Left ventricle myocardium superior (tissue), 1 donor: ENCODE measurements at regions of chr12 and their contacts with region 1.

Region 1: DNA sequence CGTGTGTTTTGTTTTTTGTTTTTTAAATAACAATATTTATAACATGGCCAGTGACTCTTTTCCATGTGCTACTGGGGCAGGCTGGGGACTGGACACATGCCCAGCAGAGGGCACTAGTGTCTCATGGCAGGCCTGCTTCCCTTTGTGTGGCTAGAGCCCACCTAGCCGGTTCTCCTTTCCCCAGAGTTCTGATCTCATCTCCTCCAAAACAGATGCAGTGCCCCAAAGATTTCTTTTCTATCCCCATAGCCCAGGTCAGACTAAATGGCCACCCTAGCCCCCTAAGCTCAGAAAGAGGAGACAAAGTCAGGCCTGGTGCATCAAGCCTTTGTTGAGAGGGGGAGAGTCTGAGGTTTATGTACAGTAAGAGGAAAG is 21.2 kb downstream of the PRPF40B start:
- DNase-seq: peak; percentile 85
- ATAC-seq: peak; percentile 81

Region 2: DNA sequence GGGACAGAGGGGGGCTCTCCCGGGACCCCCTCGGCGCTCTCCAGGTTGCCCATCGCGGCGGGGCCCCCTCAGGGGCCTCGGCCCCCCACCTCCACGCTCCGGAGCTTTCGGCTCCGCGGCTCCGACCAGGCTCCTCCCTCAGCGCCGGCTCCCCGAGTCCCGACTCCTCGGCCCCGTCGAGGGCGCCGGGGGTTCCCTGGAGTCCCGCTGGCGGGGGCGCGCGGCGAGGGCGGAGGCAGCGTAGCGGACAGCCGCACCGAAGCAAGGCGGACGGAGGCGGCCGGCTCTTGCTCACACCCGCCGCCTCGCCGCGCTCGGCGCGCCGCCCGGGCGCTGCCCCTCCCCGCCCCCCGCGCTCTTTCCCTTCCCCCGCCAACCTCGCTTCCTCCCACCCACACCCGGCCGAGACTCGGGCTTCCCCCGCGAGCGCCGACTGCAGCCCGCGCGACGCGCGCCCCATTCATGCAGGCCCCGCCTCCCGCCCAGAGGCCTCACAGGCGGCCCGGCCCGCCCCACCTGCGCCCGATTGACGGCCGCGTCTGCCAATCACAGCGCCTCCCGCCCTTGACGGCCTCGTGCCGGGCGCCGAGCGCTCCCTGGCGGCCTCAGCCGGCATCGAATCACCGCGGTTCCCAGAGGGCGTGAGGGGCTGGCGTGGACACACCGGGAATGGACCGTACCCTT is 62.7 kb after region 1 on chr12 and contains the start of gene FMNL3:
- intact Hi-C with region 1: loop called (anchors 5 kb)
- DNase-seq: peak; percentile 99
- ATAC-seq: peak; percentile 97
- total RNA-seq, gene FMNL3: 11.3 TPM